PC-9 (cell line): ENCODE measurements at regions of chr10 and their contacts with region 1.

Region 1: DNA sequence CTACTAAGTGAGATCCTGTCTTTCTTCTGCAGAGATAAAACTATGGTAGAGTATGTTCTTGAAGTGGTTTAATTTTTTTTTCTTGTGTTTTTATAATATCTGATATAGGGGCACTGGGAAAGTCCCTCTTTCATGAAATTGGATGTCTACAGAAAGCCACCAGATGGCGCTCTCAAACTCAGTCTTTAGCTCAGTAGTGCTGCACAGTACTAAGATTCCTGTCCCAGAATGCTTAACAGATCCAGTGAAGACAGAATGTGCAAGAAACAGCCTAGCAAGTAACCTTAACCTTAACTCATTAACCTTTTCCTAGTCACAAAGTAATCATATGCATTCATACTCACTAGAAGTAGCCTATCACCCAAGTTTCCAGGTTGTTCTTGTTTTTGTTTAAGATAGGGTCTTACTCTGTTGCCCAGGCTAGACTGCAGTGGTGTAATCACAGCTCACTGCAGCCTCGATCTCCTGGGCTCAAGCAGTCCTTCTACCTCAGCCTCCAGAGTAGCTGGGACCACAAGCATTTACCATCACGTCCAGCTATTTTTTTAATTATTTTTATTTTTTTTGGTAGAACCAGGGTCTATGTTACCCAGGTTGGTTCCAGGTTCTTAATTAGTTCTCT is 56.7 kb downstream of the IDE start:
- DNase-seq: peak; percentile 22 to 39
- H3K4me3 ChIP-seq: no peak overlapping the region
- H3K27ac ChIP-seq: no peak overlapping the region
- H3K4me1 ChIP-seq: no peaks in the 10 kb centered on the region
- H3K27me3 ChIP-seq: no peaks in the 10 kb centered on the region
- CTCF ChIP-seq: peak; percentile 79

Region 2: GRCh38 chr10:92450896-92451295 is 66.2 kb before region 1 on chr10:
- CTCF ChIA-PET with region 1: interaction called, 16 read pairs
- POLR2A ChIA-PET with region 1: no interaction called
- intact Hi-C with region 1: no loop called
- DNase-seq: no peak
- H3K4me3 ChIP-seq: no peak overlapping the region
- H3K27ac ChIP-seq: no peak overlapping the region
- H3K4me1 ChIP-seq: no peaks in the 10 kb centered on the region
- H3K27me3 ChIP-seq: no peaks in the 10 kb centered on the region
- CTCF ChIP-seq: no peak

Region 3: GRCh38 chr10:92552310-92552709 is 35.2 kb after region 1 on chr10:
- CTCF ChIA-PET with region 1: no interaction called
- POLR2A ChIA-PET with region 1: no interaction called
- intact Hi-C with region 1: no loop called
- DNase-seq: no peak
- H3K4me3 ChIP-seq: no peak overlapping the region
- H3K27ac ChIP-seq: no peak overlapping the region
- H3K4me1 ChIP-seq: 0 out of 2 replicates have a peak, but pooled peaks cover 7% of the 10 kb centered on the region
- H3K27me3 ChIP-seq: no peaks in the 10 kb centered on the region
- CTCF ChIP-seq: peak; percentile 43; the same call in 1 of the 2 replicates

Region 4: DNA sequence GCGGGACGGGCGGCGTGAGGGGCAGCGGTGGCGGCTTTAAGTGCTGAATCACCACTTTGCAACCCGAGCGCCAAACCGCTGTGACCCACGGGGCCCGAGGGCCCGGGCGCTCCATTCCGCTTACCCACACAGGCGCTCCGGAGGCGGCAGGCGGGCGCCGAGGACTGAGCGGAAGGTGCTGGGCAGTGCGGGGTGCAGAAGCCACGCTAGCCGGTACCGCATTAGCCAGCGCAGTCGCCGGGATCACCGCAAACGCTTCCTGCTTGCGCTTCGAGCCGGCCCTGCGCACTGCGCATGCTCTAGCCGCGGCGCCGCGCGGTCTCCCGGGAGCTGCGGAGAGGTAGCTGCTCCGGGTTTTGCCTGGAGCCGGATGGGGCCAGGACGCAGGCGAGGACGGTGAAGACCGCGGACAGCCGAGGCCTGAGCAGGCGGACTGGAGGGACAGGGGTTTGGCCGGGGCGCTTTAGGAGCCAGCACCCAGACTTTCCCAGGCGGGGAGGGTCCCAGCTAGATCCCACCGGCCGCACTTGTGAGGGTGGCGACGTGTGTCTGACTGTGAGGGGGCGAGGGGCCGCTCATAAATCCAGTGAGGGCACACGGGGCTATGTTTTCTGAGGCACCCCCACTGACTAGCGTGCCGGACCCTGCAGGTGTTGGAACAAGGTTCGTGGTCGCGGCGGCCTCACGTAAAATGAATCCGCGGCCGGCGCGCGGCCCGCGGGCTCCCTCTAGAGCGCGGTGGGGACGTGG is 56.8 kb after region 1 on chr10 and contains the start of gene IDE:
- CTCF ChIA-PET with region 1: interaction called, 4 read pairs
- POLR2A ChIA-PET with region 1: interaction called, 5 read pairs
- intact Hi-C with region 1: loop called (anchors 1 kb)
- DNase-seq: peak; percentile 58 to 81
- H3K4me3 ChIP-seq: peak within 1 kb of the TSS; percentile 93
- H3K27ac ChIP-seq: peak within 1 kb of the TSS; percentile 83
- H3K4me1 ChIP-seq: peaks cover 28% of the 10 kb centered on the region
- H3K27me3 ChIP-seq: no peaks in the 10 kb centered on the region
- CTCF ChIP-seq: peak; percentile 63
- total RNA-seq, gene IDE: 26.5 and 41.2 TPM in 2 replicates